Activated CD4-positive, alpha-beta T cell treated with anti-CD3 and anti-CD28 coated beads for 36 hours (primary cell): ENCODE measurements at regions of chrX and their contacts with region 1.

Region 1: GRCh38 chrX:155399598-155399997 is 17.7 kb downstream of the F8A2 start:
- DNase-seq: no peak
- ATAC-seq: no peak
- H3K4me3 Mint-ChIP-seq: no peak overlapping the region
- H3K27ac Mint-ChIP-seq: no peak overlapping the region
- H3K4me1 Mint-ChIP-seq: peaks cover 7% of the 10 kb centered on the region
- H3K27me3 Mint-ChIP-seq: no peaks in the 10 kb centered on the region

Region 2: GRCh38 chrX:155279873-155280272 is 119.7 kb before region 1 on chrX:
- CTCF ChIA-PET with region 1: no interaction called
- POLR2A ChIA-PET with region 1: no interaction called
- intact Hi-C with region 1: no loop called
- DNase-seq: no peak
- ATAC-seq: no peak
- H3K4me3 Mint-ChIP-seq: no peak overlapping the region
- H3K27ac Mint-ChIP-seq: no peak overlapping the region
- H3K4me1 Mint-ChIP-seq: peaks cover 5% of the 10 kb centered on the region
- H3K27me3 Mint-ChIP-seq: no peaks in the 10 kb centered on the region

Region 3: GRCh38 chrX:155441097-155441496 is 41.5 kb after region 1 on chrX:
- CTCF ChIA-PET with region 1: no interaction called
- POLR2A ChIA-PET with region 1: no interaction called
- intact Hi-C with region 1: loop called in 1 of 2 experiments (anchors 2 kb)
- DNase-seq: no peak
- ATAC-seq: no peak
- H3K4me3 Mint-ChIP-seq: no peak overlapping the region
- H3K27ac Mint-ChIP-seq: no peak overlapping the region
- H3K4me1 Mint-ChIP-seq: no peaks in the 10 kb centered on the region
- H3K27me3 Mint-ChIP-seq: no peaks in the 10 kb centered on the region

Region 4: DNA sequence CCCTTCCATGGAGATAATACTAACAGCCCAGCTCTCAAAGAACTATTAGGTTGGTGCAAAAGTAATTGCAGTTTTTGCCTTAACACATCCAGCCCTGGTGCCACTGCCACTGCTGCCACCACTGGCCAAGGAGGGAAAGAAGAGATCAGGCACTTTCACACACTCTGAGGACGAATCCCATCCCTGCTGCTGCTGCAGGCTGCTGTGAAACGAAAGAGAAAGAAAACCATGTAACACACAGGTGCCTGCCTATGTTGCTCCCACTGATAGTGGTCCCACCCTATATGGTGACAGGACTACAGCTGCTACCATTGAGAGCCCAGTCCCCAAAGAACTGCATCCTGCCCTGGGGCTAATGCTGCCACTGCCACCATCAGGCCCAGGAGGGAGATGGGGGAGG is 178.1 kb after region 1 on chrX:
- CTCF ChIA-PET with region 1: no interaction called
- POLR2A ChIA-PET with region 1: no interaction called
- intact Hi-C with region 1: no loop called
- DNase-seq: peak; percentile 18
- ATAC-seq: peak; percentile 53
- H3K4me3 Mint-ChIP-seq: no peak overlapping the region
- H3K27ac Mint-ChIP-seq: no peak overlapping the region
- H3K4me1 Mint-ChIP-seq: peaks cover 12% of the 10 kb centered on the region
- H3K27me3 Mint-ChIP-seq: no peaks in the 10 kb centered on the region